MCF 10A (cell line): ENCODE measurements at regions of chr12 and their contacts with region 1.

Region 1: DNA sequence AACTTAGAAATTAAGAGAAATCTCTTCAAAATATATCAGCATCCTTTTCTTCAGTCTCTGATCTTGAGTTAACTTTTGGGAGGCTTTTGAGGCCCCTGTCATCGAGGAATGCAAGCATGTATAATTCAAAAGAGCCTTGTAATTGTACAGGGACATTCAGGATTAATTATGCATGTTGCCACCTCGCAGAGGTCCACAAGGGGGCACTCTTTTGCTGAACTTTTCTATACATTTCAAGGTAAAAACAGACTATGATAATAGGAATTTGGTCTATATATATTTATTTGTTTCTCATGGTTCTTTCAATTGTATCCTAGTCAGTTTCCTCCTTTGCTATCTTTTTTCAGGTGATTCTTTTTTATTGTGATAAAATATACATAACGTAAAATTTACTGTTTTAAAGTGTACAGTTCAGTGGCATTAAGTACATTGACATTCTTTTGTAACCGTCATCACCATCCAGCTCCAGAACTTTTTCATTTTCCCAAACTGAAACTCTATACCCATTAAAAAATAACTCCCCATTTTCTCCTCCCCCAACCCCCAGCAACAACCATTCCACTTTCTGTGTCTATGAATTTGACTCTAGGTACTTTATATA is 47.0 kb upstream of the SLC2A13 start:
- DNase-seq: peak; percentile 72
- H3K4me3 Mint-ChIP-seq: no peak overlapping the region
- H3K27ac Mint-ChIP-seq: no peak overlapping the region
- H3K4me1 Mint-ChIP-seq: peaks cover 28% of the 10 kb centered on the region
- H3K27me3 Mint-ChIP-seq: no peaks in the 10 kb centered on the region
- CTCF ChIP-seq: peak; percentile 74

Region 2: DNA sequence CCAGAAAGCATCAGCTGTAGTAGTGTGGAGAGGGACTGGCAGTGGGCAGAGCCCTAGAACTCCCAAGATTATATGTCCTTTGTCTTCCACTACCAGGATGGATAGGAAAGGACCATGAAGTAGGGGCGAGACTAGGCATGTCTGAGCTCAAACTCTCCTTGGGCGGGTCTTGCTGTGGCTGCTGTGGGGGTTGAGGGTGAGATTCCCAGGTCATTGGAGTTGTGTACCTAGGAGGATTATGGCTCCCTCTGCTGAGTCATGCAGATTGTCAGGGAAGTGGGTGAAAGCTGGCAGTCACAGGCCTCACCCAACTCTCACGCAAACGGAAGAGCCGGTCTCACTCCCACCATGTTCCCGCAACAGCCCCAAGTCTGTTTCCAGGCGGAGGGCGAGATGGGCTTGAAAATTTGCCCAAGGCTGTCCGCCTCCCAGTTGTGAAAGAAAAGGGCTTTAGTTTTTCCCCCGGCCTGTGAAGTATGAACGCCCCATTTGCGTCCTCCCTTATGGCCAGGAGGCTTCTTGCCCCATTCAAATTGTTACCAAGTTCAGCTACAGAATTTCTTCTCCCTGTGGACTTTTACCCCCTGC is 206.4 kb before region 1 on chr12:
- CTCF ChIA-PET with region 1: no interaction called
- POLR2A ChIA-PET with region 1: no interaction called
- intact Hi-C with region 1: no loop called
- DNase-seq: peak; percentile 45
- H3K4me3 Mint-ChIP-seq: no peak overlapping the region
- H3K27ac Mint-ChIP-seq: no peak overlapping the region
- H3K4me1 Mint-ChIP-seq: no peaks in the 10 kb centered on the region
- H3K27me3 Mint-ChIP-seq: no peaks in the 10 kb centered on the region
- CTCF ChIP-seq: no peak

Region 3: DNA sequence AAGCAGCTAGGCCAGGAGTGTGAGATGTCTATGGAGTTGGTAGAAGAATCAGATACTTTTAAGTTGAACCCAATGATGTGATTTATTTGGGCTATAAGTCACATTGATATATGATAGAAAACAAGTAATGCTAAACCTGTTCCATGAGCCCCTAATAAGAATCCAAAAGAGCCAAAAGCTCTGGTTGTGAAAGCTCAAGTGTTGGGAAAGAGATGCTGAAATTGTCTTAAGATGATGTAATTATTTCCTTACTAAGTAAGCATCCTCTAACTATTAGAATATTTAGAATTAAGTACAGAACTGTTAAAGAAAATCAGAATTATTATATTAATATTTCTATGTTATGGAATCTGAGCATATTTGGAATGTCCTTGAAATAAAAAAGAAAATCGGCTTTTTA is 29.4 kb before region 1 on chr12:
- CTCF ChIA-PET with region 1: no interaction called
- POLR2A ChIA-PET with region 1: no interaction called
- intact Hi-C with region 1: no loop called
- DNase-seq: peak; percentile 22
- H3K4me3 Mint-ChIP-seq: no peak overlapping the region
- H3K27ac Mint-ChIP-seq: no peak overlapping the region
- H3K4me1 Mint-ChIP-seq: no peaks in the 10 kb centered on the region
- H3K27me3 Mint-ChIP-seq: no peaks in the 10 kb centered on the region
- CTCF ChIP-seq: no peak

Region 4: DNA sequence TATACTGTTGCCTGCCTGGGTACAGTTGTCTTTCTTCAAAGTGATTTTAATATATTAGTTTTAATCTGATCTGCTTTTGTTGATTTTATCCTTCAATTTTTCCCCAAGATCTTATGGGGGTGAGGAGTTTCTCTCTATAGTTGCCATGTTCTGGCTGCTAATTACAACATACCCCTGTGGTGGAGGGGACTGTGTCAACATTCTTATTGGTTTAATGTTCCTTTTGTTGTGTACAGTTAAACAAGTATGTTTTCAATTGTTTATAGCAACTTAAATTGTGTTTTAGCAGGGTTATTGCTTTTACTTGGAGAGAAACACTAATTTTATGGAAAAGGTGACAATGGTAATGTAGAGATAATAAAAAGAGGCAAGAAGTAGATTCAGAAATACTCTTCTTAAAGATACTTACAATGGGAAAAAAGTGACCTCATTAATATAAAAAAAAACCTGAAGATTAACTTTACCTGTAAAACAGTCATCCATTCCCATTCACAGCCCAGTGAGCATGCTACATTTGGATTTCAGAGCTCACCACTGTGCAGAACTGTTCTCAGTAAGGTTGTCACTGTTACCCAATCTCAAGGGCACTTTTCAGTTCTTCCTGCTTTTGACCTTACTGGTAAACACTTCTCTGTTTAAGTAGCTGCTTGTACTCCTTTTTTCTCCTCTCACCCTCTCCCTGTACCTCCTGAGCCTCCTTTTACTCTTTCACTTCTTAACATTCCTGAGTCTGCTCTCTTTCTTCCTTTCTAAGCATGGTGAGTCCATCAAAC is 63.8 kb after region 1 on chr12:
- CTCF ChIA-PET with region 1: interaction called, 3 read pairs
- POLR2A ChIA-PET with region 1: interaction called, 52 read pairs
- intact Hi-C with region 1: loop called (anchors 5 kb)
- DNase-seq: no peak
- H3K4me3 Mint-ChIP-seq: no peak overlapping the region
- H3K27ac Mint-ChIP-seq: peak overlapping the region; percentile 46
- H3K4me1 Mint-ChIP-seq: peaks cover 25% of the 10 kb centered on the region
- H3K27me3 Mint-ChIP-seq: no peaks in the 10 kb centered on the region
- CTCF ChIP-seq: no peak